ENCODE measurements at regions of chr10 and their contacts with region 1.

Region 1: DNA sequence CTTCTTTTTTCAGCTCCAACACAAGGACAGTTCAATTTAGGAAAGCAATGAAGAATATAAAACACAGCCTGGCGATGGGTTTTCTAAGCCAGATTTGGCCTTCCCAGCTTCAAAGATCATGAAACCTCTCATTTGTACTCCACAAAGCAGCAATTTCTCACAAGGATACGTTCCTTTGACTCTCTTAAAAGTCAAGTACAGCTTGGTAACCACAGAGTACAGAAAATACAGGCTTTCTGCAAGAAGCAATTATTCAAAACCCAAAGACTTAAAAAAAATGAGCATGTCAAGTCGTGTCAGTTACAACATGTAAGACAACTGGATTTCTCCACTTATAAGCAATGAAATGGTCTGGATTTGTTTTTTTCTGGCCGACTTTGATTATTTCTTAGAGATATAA is 321.4 kb downstream of the FGFR2 start:
- DNase-seq: no peak

Region 2: GRCh38 chr10:121058082-121058481 is 218.7 kb before region 1 on chr10:
- intact Hi-C with region 1: loop called (anchors 10 kb)
- DNase-seq: no peak